ENCODE measurements at regions of chr2 and their contacts with region 1.

Region 1: GRCh38 chr2:12127638-12128037 is 381.2 kb downstream of the LPIN1 start:
- DNase-seq: no peak
- ATAC-seq: no peak
- H3K4me3 ChIP-seq: no peak overlapping the region
- H3K27ac ChIP-seq: no peak overlapping the region
- H3K4me1 ChIP-seq: no peaks in the 10 kb centered on the region
- H3K27me3 ChIP-seq: no peaks in the 10 kb centered on the region
- CTCF ChIP-seq: no peak

Region 2: DNA sequence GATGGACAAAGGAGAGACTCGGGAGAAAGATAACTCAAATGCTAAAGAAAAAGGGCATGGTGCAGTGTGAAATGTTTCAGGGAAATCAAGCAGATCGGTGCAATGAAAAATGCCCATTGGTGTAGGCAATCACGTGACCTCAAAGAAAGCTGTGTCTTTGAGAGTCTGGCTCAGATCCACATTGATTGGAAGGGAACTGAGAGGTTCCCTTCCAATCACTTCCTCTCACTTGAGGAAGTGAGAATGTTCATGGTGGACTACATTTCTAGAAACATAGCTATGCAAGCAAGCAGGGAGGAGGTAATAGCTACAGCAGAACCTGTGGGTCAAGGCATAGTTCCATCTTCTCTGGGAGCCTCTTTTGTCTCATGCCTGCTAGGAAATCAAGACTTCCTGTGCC is 193.8 kb before region 1 on chr2:
- intact Hi-C with region 1: no loop called
- DNase-seq: no peak
- ATAC-seq: no peak
- H3K4me3 ChIP-seq: no peak overlapping the region
- H3K27ac ChIP-seq: no peak overlapping the region
- H3K4me1 ChIP-seq: no peaks in the 10 kb centered on the region
- H3K27me3 ChIP-seq: no peaks in the 10 kb centered on the region
- CTCF ChIP-seq: no peak

Region 3: DNA sequence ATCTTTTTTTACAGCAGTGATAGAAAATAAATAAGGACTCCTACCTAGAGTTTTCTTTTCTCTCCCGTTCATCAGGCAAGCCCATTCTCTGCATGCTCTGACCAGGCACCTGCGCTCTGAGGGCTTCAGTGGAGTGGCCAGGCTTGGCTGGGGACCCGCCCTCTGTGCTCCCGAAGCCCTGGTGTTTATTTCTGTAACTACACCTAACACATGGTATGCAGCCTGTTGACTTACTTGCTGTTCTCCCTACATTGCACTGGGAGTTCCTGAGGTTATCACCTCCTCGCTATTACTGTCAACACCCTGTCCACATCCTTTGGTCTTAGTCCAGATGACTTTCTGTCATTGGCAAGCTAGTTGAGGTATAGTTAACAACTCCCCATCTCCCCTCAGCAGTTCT is 63.5 kb before region 1 on chr2:
- intact Hi-C with region 1: no loop called
- DNase-seq: no peak
- ATAC-seq: no peak
- H3K4me3 ChIP-seq: no peak overlapping the region
- H3K27ac ChIP-seq: no peak overlapping the region
- H3K4me1 ChIP-seq: no peaks in the 10 kb centered on the region
- H3K27me3 ChIP-seq: no peaks in the 10 kb centered on the region
- CTCF ChIP-seq: no peak

Region 4: GRCh38 chr2:12151716-12152115 is 24.1 kb after region 1 on chr2:
- intact Hi-C with region 1: loop called in 1 of 3 experiments (anchors 2 kb)
- DNase-seq: no peak
- ATAC-seq: no peak
- H3K4me3 ChIP-seq: no peak overlapping the region
- H3K27ac ChIP-seq: no peak overlapping the region
- H3K4me1 ChIP-seq: no peaks in the 10 kb centered on the region
- H3K27me3 ChIP-seq: no peaks in the 10 kb centered on the region
- CTCF ChIP-seq: no peak

Measured in pancreas (tissue), 10 donors.